ENCODE measurements at regions of chr5 and their contacts with region 1.

Region 1: DNA sequence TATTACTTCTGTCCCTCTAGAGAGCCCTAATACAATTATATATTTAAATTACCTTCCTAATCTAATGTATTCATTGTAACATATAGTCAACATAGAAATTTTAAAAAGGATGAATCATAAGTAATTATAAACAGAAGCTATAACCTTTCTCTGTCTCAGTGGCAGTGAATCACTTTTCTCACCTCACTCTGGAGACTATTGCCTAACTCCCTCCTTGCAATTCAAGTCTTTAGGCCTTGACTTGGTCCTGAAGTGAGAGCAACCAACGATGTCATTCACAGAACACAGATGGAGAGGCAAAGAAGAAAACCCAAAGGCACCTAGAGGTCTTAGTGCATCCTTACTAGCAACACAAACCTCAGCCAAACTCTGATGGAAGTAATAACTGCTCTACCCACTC is 133.3 kb upstream of the DPYSL3 start:
- DNase-seq: peak; percentile 8
- H3K4me3 ChIP-seq: no peak overlapping the region
- H3K27ac ChIP-seq: no peak overlapping the region
- H3K4me1 ChIP-seq: no peaks in the 10 kb centered on the region
- H3K27me3 ChIP-seq: peaks cover 18% of the 10 kb centered on the region; the same call in 1 of the 2 replicates

Region 2: GRCh38 chr5:147805030-147805454 is 161.9 kb after region 1 on chr5:
- in situ Hi-C with region 1: loop called (anchors 10 kb)
- DNase-seq: no peak
- H3K4me3 ChIP-seq: no peak overlapping the region
- H3K27ac ChIP-seq: no peak overlapping the region
- H3K4me1 ChIP-seq: no peaks in the 10 kb centered on the region
- H3K27me3 ChIP-seq: no peaks in the 10 kb centered on the region

Measured in GM23248 (cell line).